ENCODE measurements at regions of chr1 and their contacts with region 1.

Region 1: GRCh38 chr1:43238085-43238484 is 31.7 kb upstream of the TMEM125 start:
- DNase-seq: peak; percentile 67
- H3K4me3 ChIP-seq: no peak overlapping the region
- H3K27ac ChIP-seq: no peak overlapping the region
- H3K4me1 ChIP-seq: peaks cover 26% of the 10 kb centered on the region
- CTCF ChIP-seq: peak; percentile 81

Region 2: GRCh38 chr1:42941640-42942330 is 296.3 kb before region 1 on chr1:
- CTCF ChIA-PET with region 1: no interaction called
- POLR2A ChIA-PET with region 1: no interaction called
- intact Hi-C with region 1: no loop called
- DNase-seq: no peak
- H3K4me3 ChIP-seq: peak overlapping the region; percentile 15
- H3K27ac ChIP-seq: peak overlapping the region; percentile 93
- H3K4me1 ChIP-seq: peaks cover 84% of the 10 kb centered on the region
- CTCF ChIP-seq: no peak

Region 3: DNA sequence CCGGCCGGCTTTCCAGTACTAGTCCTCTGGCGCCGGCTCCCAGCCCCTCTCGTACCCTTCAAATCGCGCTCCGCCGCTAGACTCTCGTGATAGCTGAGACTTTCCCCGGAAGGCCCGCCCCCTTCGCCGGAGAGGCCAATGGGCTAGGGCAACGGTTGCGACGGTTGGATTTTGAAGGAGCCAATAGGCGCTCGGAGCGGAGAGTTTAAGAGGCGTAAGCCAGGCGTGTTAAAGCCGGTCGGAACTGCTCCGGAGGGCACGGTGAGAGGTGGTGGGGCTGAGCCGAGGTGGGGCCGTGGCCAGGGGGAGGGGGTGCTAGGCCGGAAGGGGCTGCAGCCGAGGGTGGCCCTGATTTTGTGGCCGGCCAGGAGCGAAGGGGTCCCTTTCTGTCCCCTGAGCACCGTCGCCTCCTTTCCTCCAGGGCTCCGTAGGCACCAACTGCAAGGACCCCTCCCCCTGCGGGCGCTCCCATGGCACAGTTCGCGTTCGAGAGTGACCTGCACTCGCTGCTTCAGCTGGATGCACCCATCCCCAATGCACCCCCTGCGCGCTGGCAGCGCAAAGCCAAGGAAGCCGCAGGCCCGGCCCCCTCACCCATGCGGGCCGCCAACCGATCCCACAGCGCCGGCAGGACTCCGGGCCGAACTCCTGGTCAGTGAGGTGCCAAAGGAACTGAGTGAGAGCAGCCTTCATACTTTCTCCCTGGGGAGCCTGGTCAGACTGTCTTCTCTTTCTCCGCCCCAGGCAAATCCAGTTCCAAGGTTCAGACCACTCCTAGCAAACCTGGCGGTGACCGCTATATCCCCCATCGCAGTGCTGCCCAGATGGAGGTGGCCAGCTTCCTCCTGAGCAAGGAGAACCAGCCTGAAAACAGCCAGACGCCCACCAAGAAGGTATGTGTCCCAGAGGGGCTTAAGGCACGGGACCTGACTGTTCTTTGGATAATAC is 120.9 kb after region 1 on chr1 and contains the start of gene CDC20:
- CTCF ChIA-PET with region 1: interaction called, 3 read pairs
- POLR2A ChIA-PET with region 1: interaction called, 11 read pairs
- intact Hi-C with region 1: loop called (anchors 1 kb)
- DNase-seq: peak; percentile 98
- H3K4me3 ChIP-seq: peak within 1 kb of the TSS; percentile 99
- H3K27ac ChIP-seq: peak within 1 kb of the TSS; percentile 76
- H3K4me1 ChIP-seq: peaks cover 32% of the 10 kb centered on the region
- CTCF ChIP-seq: no peak
- total RNA-seq, gene CDC20: 153 and 174 TPM in 2 replicates

Region 4: DNA sequence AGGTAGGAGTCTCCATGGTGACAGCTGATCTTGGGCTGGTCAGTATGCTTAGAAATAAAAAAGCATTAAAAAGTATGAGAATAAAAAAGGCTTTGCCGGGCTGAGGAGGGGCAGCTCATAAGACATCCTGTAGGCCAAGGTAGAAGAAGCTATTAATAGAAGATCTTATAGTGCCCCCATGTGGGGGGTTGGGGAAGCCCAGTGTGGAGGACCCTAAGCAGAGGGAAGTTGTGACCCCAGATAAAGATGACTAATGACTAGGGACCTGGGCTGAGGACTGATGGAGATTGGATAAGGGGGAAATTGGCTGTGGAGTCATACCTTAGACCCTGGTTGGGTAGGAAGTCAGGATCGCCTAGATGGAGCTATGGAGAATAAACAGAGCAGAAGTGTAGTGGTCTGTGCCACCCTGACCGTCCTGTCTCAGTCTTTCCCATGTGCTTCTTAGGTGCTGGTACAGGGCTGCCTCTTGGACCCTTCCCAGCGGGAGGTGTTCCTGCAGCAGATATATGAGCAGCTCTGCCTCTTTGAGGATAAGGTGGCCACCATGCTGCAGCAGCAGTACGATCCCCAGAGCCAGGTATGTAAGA is 176.6 kb after region 1 on chr1:
- CTCF ChIA-PET with region 1: interaction called, 10 read pairs
- POLR2A ChIA-PET with region 1: no interaction called
- intact Hi-C with region 1: loop called (anchors 1 kb)
- DNase-seq: peak; percentile 72
- H3K4me3 ChIP-seq: no peak overlapping the region
- H3K27ac ChIP-seq: no peak overlapping the region
- H3K4me1 ChIP-seq: no peaks in the 10 kb centered on the region
- CTCF ChIP-seq: peak; percentile 82